ENCODE measurements at regions of chr2 and their contacts with region 1.

Region 1: DNA sequence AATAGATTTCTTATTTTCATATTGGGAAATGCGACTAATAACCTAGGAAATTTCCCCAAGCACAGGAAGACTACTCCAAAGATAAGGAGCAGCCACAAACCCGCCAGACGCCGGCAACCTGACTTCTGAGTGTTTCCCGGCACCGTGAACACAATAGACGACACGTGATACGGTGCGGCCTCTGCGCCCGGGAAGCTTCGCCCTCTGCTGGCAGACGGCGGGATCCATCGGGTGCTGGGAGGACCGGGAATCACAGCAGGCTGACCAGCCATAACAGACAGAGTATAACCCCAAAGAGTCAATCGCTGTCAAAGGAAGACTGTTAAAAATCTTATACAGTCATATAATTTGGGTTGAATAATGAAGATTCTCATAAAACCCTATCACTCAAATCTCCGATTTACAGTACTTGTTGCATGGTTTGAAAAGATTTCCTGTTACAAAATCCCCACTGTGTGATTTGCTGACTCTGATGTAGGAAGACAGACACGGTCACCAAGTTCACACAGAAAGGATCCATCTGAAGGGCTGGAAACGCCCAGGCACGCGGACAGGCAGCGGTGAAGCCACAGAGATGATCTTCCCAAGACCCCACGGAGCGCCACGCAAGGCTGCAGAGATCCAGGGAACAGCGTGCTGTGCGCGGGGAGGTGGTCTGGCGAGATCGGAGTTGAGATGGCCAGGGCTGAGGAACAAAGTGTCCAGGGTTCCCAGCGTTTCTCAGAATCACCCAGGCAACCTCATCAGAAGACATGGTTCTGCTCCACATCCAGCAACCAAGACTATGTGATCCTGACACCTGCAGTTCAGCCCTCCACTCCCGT is 73.8 kb downstream of the EIPR1 start:
- DNase-seq: peak; percentile 96
- H3K4me3 ChIP-seq: peak overlapping the region in 2 of 8 donors; percentile 19 to 46
- H3K27ac ChIP-seq: peak overlapping the region in 5 of 8 donors; percentile 9 to 56 (median 36)
- H3K4me1 ChIP-seq: peaks cover 0 to 17% (median 14%) of the 10 kb centered on the region in 6 donors
- H3K27me3 ChIP-seq: no peaks in the 10 kb centered on the region
- CTCF ChIP-seq: peak; percentile 79 to 97 (median 93)
- POLR2A ChIP-seq: no peak

Region 2: GRCh38 chr2:3001615-3002560 is 301.9 kb before region 1 on chr2:
- intact Hi-C with region 1: loop called (anchors 10 kb)
- DNase-seq: no peak
- H3K4me3 ChIP-seq: no peak overlapping the region
- H3K27ac ChIP-seq: no peak overlapping the region
- H3K4me1 ChIP-seq: peaks cover 0 to 5% (median 0%) of the 10 kb centered on the region in 6 donors
- H3K27me3 ChIP-seq: peaks cover 0 to 17% (median 0%) of the 10 kb centered on the region in 7 donors
- CTCF ChIP-seq: peak in 4 of 11 experiments; percentile 21 to 55 (median 29)
- POLR2A ChIP-seq: no peak

Region 3: GRCh38 chr2:3094999-3095958 is 208.5 kb before region 1 on chr2:
- intact Hi-C with region 1: no loop called
- DNase-seq: peak; percentile 46
- H3K4me3 ChIP-seq: no peak overlapping the region
- H3K27ac ChIP-seq: no peak overlapping the region
- H3K4me1 ChIP-seq: no peaks in the 10 kb centered on the region
- H3K27me3 ChIP-seq: peaks cover 0 to 31% (median 0%) of the 10 kb centered on the region in 7 donors
- CTCF ChIP-seq: no peak
- POLR2A ChIP-seq: no peak

Region 4: DNA sequence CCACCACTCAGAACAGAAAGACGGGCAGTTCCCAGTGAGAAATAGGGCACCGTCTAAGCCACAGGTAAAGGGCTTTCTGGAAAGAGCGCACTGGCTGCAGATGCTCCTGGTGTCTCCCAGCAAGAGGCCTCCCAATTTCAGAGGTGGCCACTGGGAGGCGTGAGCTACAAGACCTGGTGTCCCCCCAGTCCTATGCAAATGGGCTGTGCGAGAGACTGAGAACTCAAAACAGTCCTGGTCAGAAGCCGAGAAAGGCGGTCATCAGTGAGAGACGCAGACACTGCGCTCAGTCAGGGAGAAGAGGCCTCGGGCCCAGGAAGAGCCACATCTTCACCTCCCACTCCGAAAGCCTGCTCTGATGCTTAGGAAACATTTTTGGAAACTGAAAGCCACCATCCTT is 105.7 kb before region 1 on chr2:
- intact Hi-C with region 1: loop called (anchors 10 kb)
- DNase-seq: no peak
- H3K4me3 ChIP-seq: no peak overlapping the region
- H3K27ac ChIP-seq: no peak overlapping the region
- H3K4me1 ChIP-seq: peaks cover 0 to 9% (median 0%) of the 10 kb centered on the region in 6 donors
- H3K27me3 ChIP-seq: no peaks in the 10 kb centered on the region
- CTCF ChIP-seq: no peak
- POLR2A ChIP-seq: no peak

Region 5: DNA sequence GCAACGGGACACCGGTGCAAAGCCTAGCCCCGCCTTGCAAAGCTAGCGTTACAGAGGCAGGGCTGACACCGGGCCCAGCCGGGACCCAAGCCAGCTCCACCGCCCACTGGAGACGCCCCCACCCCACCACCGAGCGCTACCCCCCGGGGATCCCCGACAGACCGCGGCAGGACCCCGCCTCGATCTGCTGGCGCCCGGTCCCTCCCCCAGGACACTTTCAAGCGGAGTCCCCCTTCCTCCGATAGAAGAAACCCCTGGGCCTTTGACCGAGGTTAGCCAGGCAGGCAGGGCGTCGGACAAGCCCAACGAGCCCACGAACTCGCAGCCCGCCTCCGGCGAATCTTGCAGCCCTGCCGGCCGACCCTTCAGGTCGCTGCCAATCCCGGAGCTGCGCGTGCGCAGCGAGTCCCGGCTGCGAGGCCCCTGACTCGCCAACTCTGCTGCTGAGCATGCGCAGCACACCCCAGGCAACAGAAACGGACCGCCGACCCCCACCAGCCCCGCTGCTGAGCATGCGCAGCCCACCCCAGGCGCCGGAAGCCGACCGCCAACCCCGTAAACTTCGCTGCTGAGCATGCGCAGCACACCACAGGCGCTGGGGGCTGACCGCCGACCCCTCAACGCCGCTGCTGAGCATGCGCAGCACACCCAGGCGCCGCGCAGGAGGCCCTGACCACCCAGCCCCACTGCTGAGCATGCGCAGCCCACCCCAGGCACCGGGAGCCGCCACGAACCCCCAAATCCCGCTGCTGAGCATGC is 214.9 kb after region 1 on chr2:
- intact Hi-C with region 1: no loop called
- DNase-seq: peak; percentile 98
- H3K4me3 ChIP-seq: peak overlapping the region; percentile 73 to 96 (median 78)
- H3K27ac ChIP-seq: peak overlapping the region; percentile 93 to 100 (median 98)
- H3K4me1 ChIP-seq: peaks cover 15 to 55% (median 33%) of the 10 kb centered on the region in 6 donors
- H3K27me3 ChIP-seq: no peaks in the 10 kb centered on the region
- CTCF ChIP-seq: no peak
- POLR2A ChIP-seq: peak in 2 of 3 donors; percentile 52 to 85

Measured in spleen (tissue), 13 donors.